HEK293 (cell line): ENCODE measurements at regions of chr17 and their contacts with region 1.

Region 1: GRCh38 chr17:27601069-27601975 is 29.7 kb upstream of the LGALS9 start:
- H3K4me3 ChIP-seq: no peak overlapping the region
- H3K27ac ChIP-seq: no peak overlapping the region
- H3K4me1 ChIP-seq: no peaks in the 10 kb centered on the region
- CTCF ChIP-seq: peak; percentile 62

Region 2: GRCh38 chr17:27245230-27245696 is 356.1 kb before region 1 on chr17:
- CTCF ChIA-PET with region 1: interaction called, 208 read pairs
- POLR2A ChIA-PET with region 1: interaction called, 5 read pairs
- H3K4me3 ChIP-seq: no peak overlapping the region
- H3K27ac ChIP-seq: no peak overlapping the region
- H3K4me1 ChIP-seq: peaks cover 7% of the 10 kb centered on the region; the same call in 1 of the 2 replicates
- CTCF ChIP-seq: peak; percentile 90

Region 3: DNA sequence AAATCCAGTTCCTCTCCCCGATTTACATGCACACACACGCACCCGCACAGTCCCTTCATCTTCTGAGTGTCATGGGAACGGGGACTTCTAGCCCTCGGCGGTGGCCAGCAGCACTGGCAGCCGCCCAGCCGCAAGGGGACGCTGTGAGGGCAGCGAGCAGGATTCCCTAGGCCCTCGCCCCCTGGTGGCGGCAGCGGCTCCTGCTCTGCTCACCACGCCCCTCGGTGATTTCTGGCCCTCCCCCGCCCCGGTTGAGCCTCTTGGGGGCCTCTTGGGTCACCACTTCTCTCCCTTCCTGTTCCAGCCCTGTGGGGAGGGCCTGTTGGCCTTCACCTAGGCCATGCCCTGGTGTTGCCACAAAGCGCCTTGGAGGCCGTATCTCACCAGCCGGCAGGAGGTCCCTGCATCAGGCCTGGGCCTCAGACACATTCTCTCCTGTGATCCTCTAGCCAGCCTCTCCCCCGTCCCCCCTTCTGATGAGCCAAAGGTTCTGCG is 220.3 kb before region 1 on chr17:
- CTCF ChIA-PET with region 1: interaction called, 31 read pairs
- POLR2A ChIA-PET with region 1: no interaction called
- H3K4me3 ChIP-seq: no peak overlapping the region
- H3K27ac ChIP-seq: no peak overlapping the region
- H3K4me1 ChIP-seq: no peaks in the 10 kb centered on the region
- CTCF ChIP-seq: peak; percentile 61

Region 4: GRCh38 chr17:27455914-27456680 is 145.2 kb before region 1 on chr17 and contains the start of gene KSR1:
- CTCF ChIA-PET with region 1: interaction called, 49 read pairs
- POLR2A ChIA-PET with region 1: interaction called, 5 read pairs
- H3K4me3 ChIP-seq: peak within 1 kb of the TSS; percentile 70
- H3K27ac ChIP-seq: peak within 1 kb of the TSS; percentile 54
- H3K4me1 ChIP-seq: peaks cover 8% of the 10 kb centered on the region
- CTCF ChIP-seq: peak; percentile 85

Region 5: DNA sequence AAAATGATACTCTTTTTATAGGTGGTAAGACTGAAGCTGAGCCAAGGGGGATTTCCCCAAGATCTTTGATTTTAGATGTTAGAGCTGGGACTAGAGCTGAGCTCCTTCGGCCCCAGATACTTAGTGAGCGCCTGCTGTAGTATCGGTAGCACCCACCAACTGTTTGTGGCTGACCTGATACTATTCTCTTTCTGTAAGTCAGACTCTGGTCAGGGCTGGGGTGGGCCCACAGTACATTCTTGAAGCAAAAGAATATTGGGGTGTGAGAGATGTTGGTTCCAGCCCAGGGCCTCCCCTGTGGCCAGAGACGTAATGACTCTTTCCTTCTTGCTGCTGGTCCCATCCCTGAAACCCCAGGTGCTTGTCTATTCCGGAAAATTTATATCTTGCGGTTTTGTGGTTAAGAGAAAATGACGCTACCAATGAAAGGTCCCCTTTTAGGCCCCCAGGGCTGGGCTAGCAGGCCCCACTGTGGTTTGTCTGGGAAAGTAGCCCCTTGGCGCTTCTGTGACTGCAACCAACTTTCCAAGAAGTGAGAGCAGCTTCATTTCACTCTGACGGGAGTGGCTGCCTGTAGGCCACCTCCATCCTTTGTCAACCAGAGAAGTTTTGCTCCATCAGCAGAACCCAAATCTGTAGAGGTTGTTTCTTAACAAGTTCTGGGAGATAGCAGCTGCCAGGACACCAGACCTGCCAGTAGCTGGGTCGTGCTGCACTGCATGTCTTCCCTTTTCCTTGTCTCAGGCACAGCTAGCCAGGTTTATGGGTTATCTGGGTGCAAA is 56.8 kb before region 1 on chr17:
- CTCF ChIA-PET with region 1: interaction called, 33 read pairs
- POLR2A ChIA-PET with region 1: interaction called, 3 read pairs
- H3K4me3 ChIP-seq: no peak overlapping the region
- H3K27ac ChIP-seq: peak overlapping the region; percentile 60
- H3K4me1 ChIP-seq: peaks cover 48% of the 10 kb centered on the region
- CTCF ChIP-seq: no peak

Region 6: GRCh38 chr17:27586203-27586721 is 15.1 kb before region 1 on chr17:
- CTCF ChIA-PET with region 1: interaction called, 73 read pairs
- POLR2A ChIA-PET with region 1: interaction called, 3 read pairs
- H3K4me3 ChIP-seq: no peak overlapping the region
- H3K27ac ChIP-seq: no peak overlapping the region; the same call in 1 of the 2 replicates
- H3K4me1 ChIP-seq: no peaks in the 10 kb centered on the region
- CTCF ChIP-seq: no peak